GM12878 (cell line): ENCODE measurements at regions of chr6 and their contacts with region 1.

Region 1: GRCh38 chr6:43334466-43335095 is 26.0 kb upstream of the CRIP3 start:
- DNase-seq: no peak
- ATAC-seq: no peak
- H3K4me3 ChIP-seq: no peak overlapping the region
- H3K27ac ChIP-seq: no peak overlapping the region
- H3K4me1 ChIP-seq: peaks cover 22% of the 10 kb centered on the region
- H3K27me3 ChIP-seq: no peaks in the 10 kb centered on the region
- CTCF ChIP-seq: peak; percentile 36 to 39 (median 37)
- EP300 ChIP-seq: no peak
- POLR2A ChIP-seq: no peak
- RAD21 ChIP-seq: 0 out of 2 replicates have a peak, but pooled peaks have one; percentile 34

Region 2: DNA sequence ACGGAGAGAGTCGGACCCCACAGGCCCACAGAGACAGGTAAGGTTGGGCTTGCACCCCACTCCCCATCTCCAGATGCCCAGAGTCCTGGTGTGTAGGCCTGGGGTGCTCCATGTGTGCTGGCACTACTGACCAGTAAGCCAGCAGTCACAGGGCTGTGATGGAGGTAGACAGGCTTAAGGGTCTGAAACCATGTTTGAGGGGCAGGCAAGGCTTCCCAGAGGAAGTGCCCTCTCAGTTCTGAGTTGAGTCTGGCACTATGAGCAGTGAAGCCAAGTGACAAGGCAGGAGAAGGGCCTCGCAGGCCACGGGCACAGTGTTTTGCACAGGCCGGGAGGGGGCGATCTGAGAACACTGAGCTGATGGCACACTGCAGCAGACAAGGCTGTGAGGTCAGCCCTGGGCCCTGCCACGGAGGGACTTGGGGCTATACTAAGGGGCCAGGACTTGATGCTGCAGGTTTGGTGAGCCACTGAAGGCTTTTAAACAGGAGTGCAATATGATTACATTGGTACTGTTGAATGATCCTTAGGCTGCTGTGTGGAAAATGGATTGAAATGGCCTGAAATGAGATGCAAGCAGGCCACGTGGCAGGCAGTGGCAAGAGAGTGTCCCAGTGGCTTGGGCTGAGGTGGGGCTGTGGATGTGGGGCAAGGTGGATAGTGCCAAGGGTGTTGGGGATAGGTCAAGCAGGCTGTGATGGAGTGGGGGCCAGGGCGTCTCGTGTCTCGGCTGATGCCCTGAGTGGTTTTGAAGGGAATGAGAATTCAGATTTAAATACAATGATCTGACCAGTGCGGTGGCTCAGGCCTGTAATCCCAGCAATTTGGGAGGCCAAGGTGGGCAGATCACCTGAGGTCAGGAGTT is 71.0 kb before region 1 on chr6:
- CTCF ChIA-PET with region 1: interaction called, 15 read pairs
- POLR2A ChIA-PET with region 1: interaction called, 6 read pairs
- RAD21 ChIA-PET with region 1: interaction called, 16 read pairs
- SMC1A ChIA-PET with region 1: interaction called, 5 read pairs
- in situ Hi-C with region 1: no loop called
- intact Hi-C with region 1: loop called (anchors 2 kb)
- DNase-seq: peak; percentile 46
- ATAC-seq: peak; percentile 99
- H3K4me3 ChIP-seq: no peak overlapping the region
- H3K27ac ChIP-seq: no peak overlapping the region
- H3K4me1 ChIP-seq: peaks cover 2% of the 10 kb centered on the region; the same call in 1 of the 2 replicates
- H3K27me3 ChIP-seq: no peaks in the 10 kb centered on the region; a peak in 1 of 4 replicates
- CTCF ChIP-seq: peak; percentile 94 to 97 (median 97)
- EP300 ChIP-seq: no peak
- POLR2A ChIP-seq: no peak
- RAD21 ChIP-seq: peak; percentile 93

Region 3: GRCh38 chr6:43308101-43308989 is 26.2 kb before region 1 on chr6 and contains the start of gene CRIP3:
- CTCF ChIA-PET with region 1: interaction called, 37 read pairs
- POLR2A ChIA-PET with region 1: interaction called, 16 read pairs
- RAD21 ChIA-PET with region 1: interaction called, 48 read pairs
- SMC1A ChIA-PET with region 1: interaction called, 90 read pairs
- in situ Hi-C with region 1: no loop called
- intact Hi-C with region 1: loop called (anchors 1 kb)
- DNase-seq: no peak
- ATAC-seq: peak; percentile 92
- H3K4me3 ChIP-seq: peak within 1 kb of the TSS; percentile 57; the same call in 1 of the 2 replicates
- H3K27ac ChIP-seq: no peak within 1 kb of the TSS
- H3K4me1 ChIP-seq: peaks cover 8% of the 10 kb centered on the region
- H3K27me3 ChIP-seq: no peaks in the 10 kb centered on the region
- CTCF ChIP-seq: peak; percentile 49 to 79 (median 50)
- EP300 ChIP-seq: no peak
- POLR2A ChIP-seq: no peak
- RAD21 ChIP-seq: 0 out of 2 replicates have a peak, but pooled peaks have one; percentile 8
- polyA plus RNA-seq, gene CRIP3: 1.7 to 2.3 TPM

Region 4: DNA sequence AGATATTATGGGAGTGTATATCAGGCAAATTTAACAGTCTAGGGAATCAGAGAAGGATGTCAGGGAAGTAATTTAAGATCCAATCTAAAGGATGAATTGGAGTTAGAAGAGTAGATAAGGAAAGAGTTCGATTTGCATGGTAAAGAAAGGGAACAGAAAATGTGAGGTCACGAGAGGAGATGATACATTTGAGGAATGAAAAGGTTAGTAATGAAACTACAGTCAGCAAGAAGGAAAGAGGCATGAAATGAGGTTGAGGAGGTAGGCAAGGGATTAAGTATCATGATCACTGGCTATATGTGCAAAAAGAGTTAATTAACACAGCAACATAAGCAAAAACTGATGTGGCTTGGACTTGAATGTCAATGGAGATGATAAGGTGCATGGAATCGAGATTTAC is 12.4 kb after region 1 on chr6:
- CTCF ChIA-PET with region 1: interaction called, 12 read pairs
- POLR2A ChIA-PET with region 1: interaction called, 6 read pairs
- RAD21 ChIA-PET with region 1: no interaction called
- SMC1A ChIA-PET with region 1: interaction called, 10 read pairs
- in situ Hi-C with region 1: no loop called
- intact Hi-C with region 1: no loop called
- DNase-seq: no peak
- ATAC-seq: peak; percentile 60
- H3K4me3 ChIP-seq: no peak overlapping the region
- H3K27ac ChIP-seq: no peak overlapping the region; the same call in 1 of the 2 replicates
- H3K4me1 ChIP-seq: peaks cover 17% of the 10 kb centered on the region
- H3K27me3 ChIP-seq: no peaks in the 10 kb centered on the region
- CTCF ChIP-seq: no peak
- EP300 ChIP-seq: no peak
- POLR2A ChIP-seq: no peak
- RAD21 ChIP-seq: no peak

Region 5: DNA sequence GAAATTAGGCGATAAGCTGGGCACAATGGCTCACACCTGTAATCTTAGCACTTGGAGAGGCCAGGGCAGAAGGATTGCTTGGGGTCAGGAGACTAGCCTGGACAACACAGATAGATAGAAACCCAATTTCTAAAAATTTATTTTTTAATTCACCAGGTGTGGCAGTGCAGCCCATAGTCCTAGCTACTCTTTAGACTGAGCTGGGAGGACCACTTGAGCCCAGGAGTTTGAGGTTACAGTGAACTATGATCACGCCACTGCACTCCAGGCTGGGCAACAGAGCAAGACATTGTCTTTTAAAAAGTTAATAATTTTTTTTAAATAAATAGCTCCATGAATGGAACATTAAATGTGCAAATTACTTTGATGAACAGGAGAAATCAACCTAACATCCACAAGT is 26.7 kb after region 1 on chr6:
- CTCF ChIA-PET with region 1: interaction called, 41 read pairs
- POLR2A ChIA-PET with region 1: interaction called, 21 read pairs
- RAD21 ChIA-PET with region 1: interaction called, 25 read pairs
- SMC1A ChIA-PET with region 1: interaction called, 238 read pairs
- in situ Hi-C with region 1: no loop called
- intact Hi-C with region 1: loop called (anchors 2 kb)
- DNase-seq: no peak
- ATAC-seq: peak; percentile 68
- H3K4me3 ChIP-seq: peak overlapping the region; percentile 24; the same call in 1 of the 2 replicates
- H3K27ac ChIP-seq: no peak overlapping the region
- H3K4me1 ChIP-seq: peaks cover 10% of the 10 kb centered on the region
- H3K27me3 ChIP-seq: no peaks in the 10 kb centered on the region
- CTCF ChIP-seq: peak in 1 of 3 experiments; percentile 17; a peak in 1 of 6 replicates
- EP300 ChIP-seq: no peak
- POLR2A ChIP-seq: no peak
- RAD21 ChIP-seq: peak; percentile 28; the same call in 1 of the 2 replicates

Region 6: DNA sequence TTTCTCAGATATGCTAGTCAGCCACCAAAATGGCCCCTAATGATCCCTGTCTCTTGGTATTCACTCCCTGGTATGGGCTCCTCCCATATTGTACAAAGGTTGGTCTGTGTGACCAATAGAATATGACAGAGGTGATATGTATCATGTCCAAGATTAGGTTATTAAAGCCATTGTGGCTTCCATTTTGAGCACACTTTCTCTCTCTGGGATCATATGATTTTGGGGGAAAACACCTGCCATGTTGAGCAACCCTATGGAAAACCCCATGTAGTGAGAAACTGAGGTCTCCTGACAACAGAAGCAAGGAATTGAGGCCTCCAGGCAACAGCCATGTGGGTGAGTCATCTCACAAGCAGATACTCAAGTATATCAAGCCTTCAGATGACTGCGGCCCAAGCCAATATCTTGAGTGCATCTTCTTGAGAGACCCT is 42.0 kb after region 1 on chr6:
- CTCF ChIA-PET with region 1: interaction called, 5 read pairs
- POLR2A ChIA-PET with region 1: interaction called, 53 read pairs
- RAD21 ChIA-PET with region 1: interaction called, 68 read pairs
- SMC1A ChIA-PET with region 1: interaction called, 85 read pairs
- in situ Hi-C with region 1: no loop called
- intact Hi-C with region 1: no loop called
- DNase-seq: peak; percentile 88
- ATAC-seq: peak; percentile 78
- H3K4me3 ChIP-seq: no peak overlapping the region
- H3K27ac ChIP-seq: peak overlapping the region; percentile 81
- H3K4me1 ChIP-seq: peaks cover 69% of the 10 kb centered on the region
- H3K27me3 ChIP-seq: no peaks in the 10 kb centered on the region
- CTCF ChIP-seq: no peak
- EP300 ChIP-seq: peak; percentile 6 to 67; a peak in 2 of 4 replicates
- POLR2A ChIP-seq: no peak
- RAD21 ChIP-seq: no peak

Region 7: GRCh38 chr6:43391440-43392031 is 57.0 kb after region 1 on chr6:
- CTCF ChIA-PET with region 1: interaction called, 11 read pairs
- POLR2A ChIA-PET with region 1: interaction called, 4 read pairs
- RAD21 ChIA-PET with region 1: interaction called, 13 read pairs
- SMC1A ChIA-PET with region 1: interaction called, 15 read pairs
- in situ Hi-C with region 1: no loop called
- intact Hi-C with region 1: no loop called
- DNase-seq: no peak
- ATAC-seq: peak; percentile 5
- H3K4me3 ChIP-seq: peak overlapping the region; percentile 52
- H3K27ac ChIP-seq: peak overlapping the region; percentile 59
- H3K4me1 ChIP-seq: peaks cover 6% of the 10 kb centered on the region; the same call in 1 of the 2 replicates
- H3K27me3 ChIP-seq: no peaks in the 10 kb centered on the region
- CTCF ChIP-seq: no peak
- EP300 ChIP-seq: no peak
- POLR2A ChIP-seq: no peak
- RAD21 ChIP-seq: no peak

Region 8: GRCh38 chr6:43471399-43471798 is 136.8 kb after region 1 on chr6:
- CTCF ChIA-PET with region 1: no interaction called
- POLR2A ChIA-PET with region 1: no interaction called
- RAD21 ChIA-PET with region 1: no interaction called
- SMC1A ChIA-PET with region 1: no interaction called
- in situ Hi-C with region 1: no loop called
- intact Hi-C with region 1: no loop called
- DNase-seq: no peak
- ATAC-seq: no peak
- H3K4me3 ChIP-seq: no peak overlapping the region
- H3K27ac ChIP-seq: no peak overlapping the region
- H3K4me1 ChIP-seq: no peaks in the 10 kb centered on the region
- H3K27me3 ChIP-seq: peaks cover 0 to 2% of the 10 kb centered on the region in 2 experiments; a peak in 1 of 4 replicates
- CTCF ChIP-seq: no peak
- EP300 ChIP-seq: no peak
- POLR2A ChIP-seq: no peak
- RAD21 ChIP-seq: no peak

Region 9: DNA sequence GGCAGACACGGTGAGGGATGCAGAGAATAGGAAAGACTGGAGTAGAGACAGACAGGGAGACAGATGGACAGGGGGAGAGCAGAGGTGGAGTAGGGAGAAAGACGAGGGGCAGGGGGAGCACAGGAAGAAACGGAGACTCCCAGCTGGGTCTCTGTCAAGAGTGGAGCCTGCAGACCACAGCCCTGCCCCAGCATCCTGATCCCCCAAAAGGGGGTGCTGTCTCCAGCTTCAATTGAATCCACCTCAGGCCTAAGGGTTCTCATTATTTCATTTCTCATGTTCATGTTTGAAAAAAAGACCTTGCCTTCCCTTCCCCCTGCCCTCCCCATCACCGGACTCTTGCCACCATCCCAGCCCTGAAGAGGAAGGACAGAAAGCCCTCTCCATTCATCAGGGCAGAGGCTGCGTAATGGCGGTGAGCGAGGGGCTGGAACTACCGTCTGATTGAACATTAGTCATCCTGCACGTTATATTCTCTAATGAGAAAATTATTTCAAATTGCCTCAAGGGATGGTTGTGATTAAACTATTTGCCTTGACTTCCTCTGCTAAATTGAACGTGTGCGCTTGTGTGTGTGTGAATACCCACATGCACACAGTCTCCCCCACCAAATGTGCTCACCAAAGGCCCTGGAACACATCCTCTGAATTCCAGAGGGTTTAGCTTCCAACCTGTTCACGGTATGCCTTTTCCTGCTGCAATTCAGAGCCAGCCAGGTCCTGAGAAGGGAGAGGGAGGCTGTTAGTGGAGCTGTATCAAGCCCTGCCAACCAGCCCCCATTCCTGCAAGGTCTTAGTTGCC is 1151.2 kb after region 1 on chr6:
- CTCF ChIA-PET with region 1: no interaction called
- POLR2A ChIA-PET with region 1: no interaction called
- RAD21 ChIA-PET with region 1: no interaction called
- SMC1A ChIA-PET with region 1: no interaction called
- in situ Hi-C with region 1: no loop called
- intact Hi-C with region 1: no loop called
- DNase-seq: no peak
- ATAC-seq: no peak
- H3K4me3 ChIP-seq: no peak overlapping the region
- H3K27ac ChIP-seq: no peak overlapping the region
- H3K4me1 ChIP-seq: no peaks in the 10 kb centered on the region
- H3K27me3 ChIP-seq: peaks cover 0 to 1% of the 10 kb centered on the region in 2 experiments; a peak in 1 of 4 replicates
- CTCF ChIP-seq: no peak
- EP300 ChIP-seq: no peak
- POLR2A ChIP-seq: no peak
- RAD21 ChIP-seq: no peak